Left lung (tissue), 14 donors: ENCODE measurements at regions of chr19 and their contacts with region 1.

Region 1: DNA sequence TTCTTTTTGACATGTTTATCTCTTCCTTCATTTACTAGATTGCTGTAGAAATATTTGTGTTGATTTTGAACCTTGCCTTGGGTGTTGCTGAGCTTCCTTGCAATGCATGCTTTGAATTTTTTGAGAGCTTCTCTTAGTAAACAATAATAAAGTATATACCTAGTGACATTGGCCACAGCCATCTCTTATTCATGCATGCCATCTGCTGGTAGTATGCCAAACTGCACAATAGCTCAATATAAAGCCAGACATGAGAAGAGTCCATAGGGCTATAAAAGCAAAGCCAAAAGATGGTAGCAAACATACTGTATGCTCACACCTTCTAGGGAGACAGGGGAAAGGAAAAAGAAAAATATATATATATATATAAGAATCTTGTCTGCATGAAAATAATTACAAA is 18.9 kb upstream of the ZSCAN5A start:
- DNase-seq: no peak
- ATAC-seq: peak; percentile 87
- H3K4me3 ChIP-seq: no peak overlapping the region
- H3K27ac ChIP-seq: no peak overlapping the region
- H3K4me1 ChIP-seq: no peaks in the 10 kb centered on the region
- H3K27me3 ChIP-seq: no peaks in the 10 kb centered on the region
- CTCF ChIP-seq: peak; percentile 36 to 58

Region 2: DNA sequence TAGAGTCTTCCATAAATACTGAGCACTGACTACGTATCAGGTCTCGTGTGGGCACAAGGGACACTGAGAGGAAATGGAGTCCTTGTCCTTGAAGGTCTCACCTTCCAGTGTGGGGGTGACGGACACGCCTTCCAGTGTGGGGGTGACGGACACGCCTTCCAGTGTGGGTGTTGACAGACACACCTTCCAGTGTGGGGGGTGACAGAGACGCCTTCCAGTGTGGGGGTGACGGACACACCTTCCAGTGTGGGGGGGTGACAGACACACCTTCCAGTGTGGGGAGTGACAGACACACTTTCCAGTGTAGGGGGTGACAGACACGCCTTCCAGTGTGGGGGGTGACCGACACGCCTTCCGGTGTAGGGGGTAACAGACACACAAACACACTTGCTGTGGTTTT is 75.2 kb before region 1 on chr19:
- intact Hi-C with region 1: loop called in 1 of 2 experiments (anchors 5 kb)
- DNase-seq: no peak
- ATAC-seq: no peak
- H3K4me3 ChIP-seq: no peak overlapping the region
- H3K27ac ChIP-seq: no peak overlapping the region
- H3K4me1 ChIP-seq: no peaks in the 10 kb centered on the region
- H3K27me3 ChIP-seq: no peaks in the 10 kb centered on the region
- CTCF ChIP-seq: no peak